AG04450 (cell line): ENCODE measurements at regions of chr15 and their contacts with region 1.

Region 1: GRCh38 chr15:90286678-90287077 is 21.2 kb downstream of the NGRN start:
- DNase-seq: no peak
- H3K4me3 ChIP-seq: no peak overlapping the region
- H3K27ac ChIP-seq: no peak overlapping the region
- H3K27me3 ChIP-seq: no peaks in the 10 kb centered on the region
- CTCF ChIP-seq: peak; percentile 34

Region 2: DNA sequence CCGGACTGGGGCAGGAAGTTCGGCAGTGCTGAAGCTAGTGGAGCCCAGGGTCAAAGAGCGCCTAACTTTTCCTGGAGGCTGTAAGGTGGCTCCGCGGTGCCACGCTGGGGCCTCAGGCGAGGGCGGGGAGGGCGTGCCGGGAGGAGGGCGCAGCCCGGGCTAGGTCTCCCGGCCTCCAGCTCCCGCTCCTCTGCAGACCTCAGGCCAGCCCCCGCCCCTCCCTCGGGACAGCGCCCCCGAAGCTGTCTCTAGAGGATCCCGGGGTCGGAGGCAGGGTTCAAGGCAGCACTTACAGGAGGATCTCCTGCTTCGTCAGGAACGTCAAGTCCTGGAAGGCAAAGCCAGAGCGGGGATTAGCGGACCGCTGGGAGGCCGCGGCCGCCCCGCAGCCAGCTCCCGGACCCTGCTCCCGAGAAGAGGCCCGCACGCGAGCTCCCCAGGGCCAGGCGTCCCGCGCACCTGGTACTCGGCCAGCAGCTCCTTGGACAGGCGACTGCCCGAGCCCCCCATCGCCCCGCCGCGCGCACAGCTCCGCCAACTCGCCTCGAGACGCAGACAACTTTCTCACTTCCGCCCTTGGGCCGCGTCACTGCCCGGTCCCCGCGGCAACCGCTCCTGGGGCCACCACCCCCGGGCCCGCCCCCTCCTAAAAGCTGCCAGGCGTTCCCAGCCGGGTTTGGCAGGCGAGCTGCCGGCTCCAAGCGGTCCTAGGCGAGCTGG is 53.1 kb before region 1 on chr15 and contains the start of gene CIB1:
- CTCF ChIA-PET with region 1: interaction called, 14 read pairs
- POLR2A ChIA-PET with region 1: no interaction called
- DNase-seq: peak; percentile 81
- H3K4me3 ChIP-seq: peak within 1 kb of the TSS; percentile 82
- H3K27ac ChIP-seq: peak within 1 kb of the TSS; percentile 65
- H3K27me3 ChIP-seq: no peaks in the 10 kb centered on the region
- CTCF ChIP-seq: no peak
- polyA plus RNA-seq, gene CIB1: 40.4 and 55.3 TPM in 2 replicates

Region 3: DNA sequence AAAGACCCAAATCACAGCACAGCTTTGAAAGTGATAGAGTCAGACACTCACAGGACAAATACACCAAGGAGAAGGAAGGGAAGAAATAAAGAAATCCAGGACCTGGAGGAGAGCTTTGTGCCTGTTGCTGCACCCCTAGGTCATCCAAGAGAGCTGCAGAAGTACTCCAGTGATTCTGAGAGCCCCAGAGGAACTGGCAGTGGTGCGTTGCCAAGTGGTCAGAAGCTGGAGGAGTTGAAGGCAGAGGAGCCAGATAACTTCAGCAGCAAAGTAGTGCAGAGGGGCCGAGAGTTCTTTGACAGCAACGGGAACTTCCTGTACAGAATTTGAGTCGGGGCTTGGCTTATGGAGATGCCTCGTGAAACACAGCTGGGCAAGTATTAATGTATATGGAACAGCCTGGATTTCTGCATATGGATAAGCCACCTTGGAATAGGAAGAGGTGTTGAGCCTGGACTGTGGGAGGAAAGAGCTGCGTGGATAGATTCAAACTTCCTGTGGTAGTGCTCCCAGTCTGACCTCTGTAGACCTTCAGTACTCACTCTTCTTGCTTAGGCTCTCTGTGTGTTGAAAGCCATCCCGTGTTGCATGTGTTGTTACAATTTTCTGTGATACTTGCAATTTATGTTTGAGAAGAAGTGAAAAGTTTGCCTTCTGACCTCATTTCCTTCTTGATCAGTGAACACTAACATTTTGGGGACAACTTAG is 15.1 kb before region 1 on chr15:
- CTCF ChIA-PET with region 1: no interaction called
- POLR2A ChIA-PET with region 1: no interaction called
- DNase-seq: no peak
- H3K4me3 ChIP-seq: no peak overlapping the region
- H3K27ac ChIP-seq: no peak overlapping the region
- H3K27me3 ChIP-seq: no peaks in the 10 kb centered on the region
- CTCF ChIP-seq: no peak